CD4-positive, alpha-beta T cell (primary cell): ENCODE measurements at regions of chr11 and their contacts with region 1.

Region 1: GRCh38 chr11:64803163-64803845 is at the start of gene MAP4K2:
- DNase-seq: peak; percentile 67 to 97 (median 83)
- ATAC-seq: peak; percentile 86
- H3K4me3 ChIP-seq: peak within 1 kb of the TSS; percentile 85
- H3K4me3 Mint-ChIP-seq: peak within 1 kb of the TSS; percentile 91
- H3K27ac ChIP-seq: peak within 1 kb of the TSS; percentile 86 to 95
- H3K27ac Mint-ChIP-seq: peak within 1 kb of the TSS; percentile 91
- H3K4me1 ChIP-seq: peaks cover 41% of the 10 kb centered on the region
- H3K4me1 Mint-ChIP-seq: peaks cover 38% of the 10 kb centered on the region
- H3K27me3 ChIP-seq: no peaks in the 10 kb centered on the region
- H3K27me3 Mint-ChIP-seq: no peaks in the 10 kb centered on the region
- CTCF ChIP-seq: no peak
- total RNA-seq, gene MAP4K2: 71.9 to 74.1 TPM

Region 2: DNA sequence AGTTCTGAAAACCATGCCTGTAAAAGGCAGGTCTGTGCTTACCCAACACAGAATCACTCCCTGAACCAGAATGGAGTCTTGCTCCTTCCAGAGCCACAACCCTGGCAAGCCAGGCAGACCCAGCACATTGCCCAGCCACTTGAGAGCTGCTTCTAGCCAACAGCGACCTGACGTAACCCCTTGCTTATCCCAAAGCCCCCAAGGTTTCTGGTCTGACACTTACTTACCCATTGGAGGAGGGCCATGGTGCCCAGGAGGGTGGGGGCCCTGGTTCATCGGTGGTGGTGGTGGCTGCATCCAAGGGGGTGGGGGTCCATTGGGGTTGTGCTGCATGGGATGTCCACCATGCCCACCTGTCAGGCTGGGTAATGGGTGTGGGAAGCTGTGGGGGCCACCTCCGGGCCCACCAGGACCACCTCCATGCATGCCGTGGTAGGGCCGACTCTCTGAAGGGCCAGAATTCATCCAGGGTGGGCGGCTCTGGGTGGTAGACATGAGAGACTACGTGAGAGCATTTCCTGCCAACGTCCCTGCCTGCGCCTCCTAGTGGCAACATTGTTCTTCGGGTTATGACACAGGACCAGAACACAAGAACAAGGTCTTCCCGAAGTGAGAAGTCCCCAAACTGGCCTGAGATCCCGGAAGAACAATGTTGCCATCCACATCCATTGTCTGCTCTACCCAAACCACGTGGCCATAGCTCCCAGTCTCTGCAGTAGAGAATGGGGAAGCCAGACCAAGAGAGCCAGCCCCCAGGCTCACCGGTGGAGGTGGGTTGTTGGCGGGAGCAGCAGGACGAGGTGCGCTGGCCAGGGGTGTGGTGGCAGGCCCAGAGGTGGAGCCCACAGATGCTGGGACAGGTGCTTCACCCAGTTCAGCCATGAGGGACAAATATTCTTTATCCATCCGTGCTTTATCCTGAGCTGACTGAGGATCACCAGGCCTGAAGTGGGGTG is 35.7 kb before region 1 on chr11:
- CTCF ChIA-PET with region 1: no interaction called
- POLR2A ChIA-PET with region 1: interaction called, 15 read pairs
- intact Hi-C with region 1: no loop called
- DNase-seq: peak; percentile 65 to 91 (median 82)
- ATAC-seq: peak; percentile 24
- H3K4me3 ChIP-seq: no peak overlapping the region
- H3K4me3 Mint-ChIP-seq: peak overlapping the region; percentile 84
- H3K27ac ChIP-seq: peak overlapping the region; percentile 65 to 72
- H3K27ac Mint-ChIP-seq: peak overlapping the region; percentile 85
- H3K4me1 ChIP-seq: peaks cover 92% of the 10 kb centered on the region
- H3K4me1 Mint-ChIP-seq: peaks cover 87% of the 10 kb centered on the region
- H3K27me3 ChIP-seq: no peaks in the 10 kb centered on the region
- H3K27me3 Mint-ChIP-seq: no peaks in the 10 kb centered on the region
- CTCF ChIP-seq: peak; percentile 74

Region 3: GRCh38 chr11:64787526-64788320 is 15.6 kb before region 1 on chr11:
- CTCF ChIA-PET with region 1: interaction called, 7 read pairs
- POLR2A ChIA-PET with region 1: interaction called, 10 read pairs
- intact Hi-C with region 1: loop called in 1 of 2 experiments (anchors 2 kb)
- DNase-seq: peak; percentile 44 to 78 (median 58)
- ATAC-seq: peak; percentile 88
- H3K4me3 ChIP-seq: no peak overlapping the region
- H3K4me3 Mint-ChIP-seq: no peak overlapping the region
- H3K27ac ChIP-seq: no peak overlapping the region
- H3K27ac Mint-ChIP-seq: peak overlapping the region; percentile 69
- H3K4me1 ChIP-seq: peaks cover 13% of the 10 kb centered on the region
- H3K4me1 Mint-ChIP-seq: peaks cover 12% of the 10 kb centered on the region
- H3K27me3 ChIP-seq: no peaks in the 10 kb centered on the region
- H3K27me3 Mint-ChIP-seq: no peaks in the 10 kb centered on the region
- CTCF ChIP-seq: peak; percentile 82

Region 4: DNA sequence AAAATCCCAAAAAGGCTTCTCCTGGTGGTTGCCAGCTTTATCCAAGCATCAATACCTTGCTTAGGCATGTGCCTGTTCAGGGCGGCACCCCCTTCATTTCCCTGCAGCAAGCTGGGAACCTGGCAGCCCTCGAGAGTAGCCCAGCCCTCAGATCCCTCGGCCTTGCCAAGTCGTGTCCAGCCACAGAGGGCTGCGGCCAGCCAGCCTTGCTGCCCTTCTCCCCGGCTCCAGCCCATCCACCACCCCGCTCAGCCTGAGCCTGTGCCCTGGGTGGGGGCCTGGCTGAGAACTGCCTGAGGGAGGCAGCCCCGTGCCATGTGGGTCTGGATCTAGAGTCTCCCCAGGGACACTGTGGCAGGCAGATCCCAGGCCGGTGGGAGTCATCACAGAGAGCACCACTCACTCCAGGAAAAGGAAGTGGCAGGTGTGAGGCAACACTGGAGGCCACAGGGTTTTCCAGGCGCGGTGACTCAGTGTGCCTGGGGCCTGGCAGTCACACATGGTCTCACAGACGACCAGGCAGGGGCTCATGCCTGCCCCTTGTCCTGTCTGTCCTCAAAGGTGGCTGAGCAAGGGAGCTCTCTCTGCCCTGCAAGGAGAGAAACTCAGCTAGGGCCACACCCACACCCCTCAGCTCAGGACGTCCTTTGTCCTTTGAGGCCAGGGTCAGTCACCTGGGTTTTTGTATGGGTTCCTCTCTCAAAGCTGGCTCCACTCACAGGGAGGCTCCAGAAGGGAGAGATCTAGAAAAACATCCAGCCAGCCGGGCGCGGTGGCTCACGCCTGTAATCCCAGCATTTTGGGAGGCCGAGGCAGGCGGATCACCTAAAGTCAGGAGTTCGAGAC is 53.3 kb after region 1 on chr11:
- CTCF ChIA-PET with region 1: no interaction called
- POLR2A ChIA-PET with region 1: no interaction called
- intact Hi-C with region 1: no loop called
- DNase-seq: peak in 4 of 14 experiments; percentile 51 to 81 (median 65)
- ATAC-seq: no peak
- H3K4me3 ChIP-seq: peak overlapping the region; percentile 0
- H3K4me3 Mint-ChIP-seq: peak overlapping the region; percentile 65
- H3K27ac ChIP-seq: peak overlapping the region; percentile 59 to 79
- H3K27ac Mint-ChIP-seq: peak overlapping the region; percentile 91
- H3K4me1 ChIP-seq: peaks cover 100% of the 10 kb centered on the region
- H3K4me1 Mint-ChIP-seq: peaks cover 92% of the 10 kb centered on the region
- H3K27me3 ChIP-seq: no peaks in the 10 kb centered on the region
- H3K27me3 Mint-ChIP-seq: no peaks in the 10 kb centered on the region
- CTCF ChIP-seq: no peak

Region 5: DNA sequence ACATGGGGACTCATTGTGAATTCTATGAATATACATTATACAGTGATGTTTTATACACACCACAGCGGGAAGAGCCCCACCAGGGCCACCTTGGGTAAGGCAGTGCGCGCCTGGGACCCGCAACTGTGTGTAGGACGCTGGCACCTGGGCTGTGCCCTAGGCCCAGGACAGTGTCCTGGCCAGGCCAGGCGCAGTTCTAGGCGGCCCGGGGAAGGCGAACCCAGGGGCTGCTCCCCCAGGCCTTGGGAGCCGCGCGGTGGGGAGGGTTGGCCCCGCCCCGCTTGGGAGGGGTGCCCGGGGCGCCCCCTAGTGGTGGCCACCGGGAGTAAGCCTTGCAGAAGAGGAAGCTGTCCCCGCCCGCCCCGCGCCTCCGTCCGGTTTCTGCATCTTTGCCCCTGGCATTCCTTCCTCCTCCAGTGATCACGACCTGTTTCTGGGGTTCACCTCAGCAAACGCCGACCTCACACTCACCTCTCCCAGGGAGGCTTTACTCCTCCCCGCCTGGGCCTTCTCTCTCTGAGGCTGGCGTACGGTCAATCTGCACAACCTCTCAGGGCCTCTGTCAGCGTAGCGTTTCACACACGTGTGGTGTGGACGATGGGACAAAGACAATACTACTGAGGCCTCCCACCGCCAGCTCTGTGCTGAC is 84.6 kb after region 1 on chr11:
- CTCF ChIA-PET with region 1: interaction called, 4 read pairs
- POLR2A ChIA-PET with region 1: no interaction called
- intact Hi-C with region 1: loop called in 1 of 2 experiments (anchors 5 kb)
- DNase-seq: peak; percentile 72 to 91 (median 84)
- ATAC-seq: peak; percentile 87
- H3K4me3 ChIP-seq: peak overlapping the region; percentile 4
- H3K4me3 Mint-ChIP-seq: peak overlapping the region; percentile 74
- H3K27ac ChIP-seq: peak overlapping the region in 1 of 2 donors; percentile 19
- H3K27ac Mint-ChIP-seq: peak overlapping the region; percentile 75
- H3K4me1 ChIP-seq: peaks cover 39% of the 10 kb centered on the region
- H3K4me1 Mint-ChIP-seq: peaks cover 26% of the 10 kb centered on the region
- H3K27me3 ChIP-seq: no peaks in the 10 kb centered on the region
- H3K27me3 Mint-ChIP-seq: no peaks in the 10 kb centered on the region
- CTCF ChIP-seq: peak; percentile 97

Region 6: GRCh38 chr11:65111744-65112414 is 308.6 kb after region 1 on chr11 and contains the start of gene TM7SF2:
- CTCF ChIA-PET with region 1: no interaction called
- POLR2A ChIA-PET with region 1: no interaction called
- intact Hi-C with region 1: loop called in 1 of 2 experiments (anchors 5 kb)
- DNase-seq: peak; percentile 88 to 98 (median 94)
- ATAC-seq: peak; percentile 75
- H3K4me3 ChIP-seq: peak within 1 kb of the TSS; percentile 81
- H3K4me3 Mint-ChIP-seq: peak within 1 kb of the TSS; percentile 95
- H3K27ac ChIP-seq: peak within 1 kb of the TSS; percentile 62 to 68
- H3K27ac Mint-ChIP-seq: peak within 1 kb of the TSS; percentile 92
- H3K4me1 ChIP-seq: peaks cover 63% of the 10 kb centered on the region
- H3K4me1 Mint-ChIP-seq: peaks cover 36% of the 10 kb centered on the region
- H3K27me3 ChIP-seq: no peaks in the 10 kb centered on the region
- H3K27me3 Mint-ChIP-seq: no peaks in the 10 kb centered on the region
- CTCF ChIP-seq: no peak
- total RNA-seq, gene TM7SF2: 20.0 to 20.4 TPM